PC-9 (cell line): ENCODE measurements at regions of chr11 and their contacts with region 1.

Region 1: DNA sequence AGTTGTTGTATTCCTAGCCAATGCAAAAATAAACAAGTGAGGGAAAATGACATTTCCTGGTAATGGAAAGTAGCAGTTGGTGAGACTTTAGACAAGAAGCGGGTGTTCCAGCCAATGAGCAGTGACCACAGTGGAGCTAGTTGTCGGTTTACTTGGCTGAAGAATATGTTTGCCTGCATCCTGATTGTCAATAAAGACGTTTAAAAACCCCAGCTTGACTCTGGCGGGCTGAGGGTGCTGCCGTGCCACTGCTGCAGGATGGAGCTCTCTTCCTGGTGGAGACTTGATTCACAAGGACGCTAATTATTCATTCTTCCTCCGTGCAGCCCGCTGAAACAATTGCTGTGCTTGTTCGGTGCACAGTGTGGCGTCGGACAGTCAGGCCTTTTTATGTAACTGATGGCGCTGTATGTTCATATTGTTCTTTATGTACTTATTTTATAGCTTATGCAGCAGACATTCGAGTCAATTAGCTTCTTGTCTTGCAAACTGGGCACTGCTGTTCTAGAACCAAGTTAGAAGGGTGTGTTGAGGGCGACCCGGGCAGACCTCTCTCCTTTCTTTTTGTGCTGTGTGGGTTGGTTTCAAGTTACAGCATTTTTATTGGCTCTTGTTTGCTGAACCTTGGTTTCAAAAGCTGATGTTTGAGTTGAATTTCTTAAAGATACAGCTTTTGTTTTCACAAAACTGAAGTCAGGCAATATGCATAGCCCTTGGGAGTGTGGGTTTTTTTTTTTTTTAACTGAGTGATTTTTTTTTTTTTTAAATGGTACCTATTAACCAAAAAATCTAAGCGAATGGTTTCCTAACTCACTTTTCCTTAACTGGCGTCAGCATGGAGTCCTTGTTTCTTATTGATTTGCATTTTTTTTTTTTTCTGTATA is 153.9 kb downstream of the TEAD1 start:
- DNase-seq: peak; percentile 36 to 74
- H3K4me3 ChIP-seq: peak overlapping the region; percentile 52
- H3K27ac ChIP-seq: peak overlapping the region; percentile 52
- H3K4me1 ChIP-seq: peaks cover 32% of the 10 kb centered on the region
- H3K27me3 ChIP-seq: no peaks in the 10 kb centered on the region
- CTCF ChIP-seq: no peak

Region 2: GRCh38 chr11:12600829-12601228 is 227.3 kb before region 1 on chr11:
- CTCF ChIA-PET with region 1: no interaction called
- POLR2A ChIA-PET with region 1: no interaction called
- intact Hi-C with region 1: no loop called
- DNase-seq: no peak
- H3K4me3 ChIP-seq: no peak overlapping the region
- H3K27ac ChIP-seq: no peak overlapping the region
- H3K4me1 ChIP-seq: no peaks in the 10 kb centered on the region
- H3K27me3 ChIP-seq: no peaks in the 10 kb centered on the region
- CTCF ChIP-seq: no peak

Region 3: GRCh38 chr11:12611352-12611751 is 216.8 kb before region 1 on chr11:
- CTCF ChIA-PET with region 1: no interaction called
- POLR2A ChIA-PET with region 1: interaction called, 14 read pairs
- intact Hi-C with region 1: no loop called
- DNase-seq: no peak
- H3K4me3 ChIP-seq: no peak overlapping the region
- H3K27ac ChIP-seq: no peak overlapping the region
- H3K4me1 ChIP-seq: no peaks in the 10 kb centered on the region
- H3K27me3 ChIP-seq: no peaks in the 10 kb centered on the region
- CTCF ChIP-seq: no peak

Region 4: DNA sequence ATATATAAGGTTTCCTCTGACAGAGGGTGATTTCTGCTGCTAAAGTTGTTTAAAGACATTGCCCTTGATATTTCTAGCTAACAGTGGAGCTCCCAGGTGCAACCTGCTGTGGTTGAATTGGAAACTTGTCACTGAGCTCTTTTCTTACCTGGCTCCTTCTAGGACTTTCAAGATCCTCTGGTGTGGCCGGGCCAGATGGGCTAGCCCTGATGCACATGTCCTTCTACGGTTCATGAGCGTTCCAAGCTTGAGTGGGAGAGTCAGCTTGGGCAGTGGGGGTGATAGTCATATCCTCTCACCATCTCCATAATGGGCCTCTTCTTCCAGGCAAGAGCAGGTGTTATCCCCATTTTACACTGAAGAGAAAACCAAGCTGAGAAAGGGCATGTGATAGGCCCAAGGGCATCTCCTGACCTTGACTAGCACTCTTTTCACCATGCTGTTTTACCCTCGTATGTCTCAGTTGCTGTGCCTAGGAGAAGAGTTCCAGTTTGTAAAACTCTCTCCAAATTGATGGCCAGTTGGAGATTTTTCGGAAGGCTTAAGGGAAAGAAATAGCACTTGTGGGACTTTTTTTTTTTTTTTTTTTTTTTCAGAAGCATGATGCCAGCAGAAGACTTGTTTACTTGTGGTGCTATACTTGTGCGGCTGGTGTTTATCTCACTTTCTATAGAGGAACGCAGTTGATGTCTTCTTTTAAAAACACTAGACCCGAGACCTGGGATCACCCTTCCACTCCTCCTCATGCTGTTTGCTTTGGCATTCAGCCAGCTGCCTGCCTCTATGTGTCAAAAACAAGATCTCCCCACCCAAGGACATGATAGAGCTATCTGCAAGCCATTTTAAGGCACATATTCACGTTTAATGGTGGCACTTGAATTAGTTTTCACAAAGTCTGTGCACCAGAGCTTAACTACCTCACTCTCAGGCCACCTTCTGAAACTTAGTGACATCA is 121.3 kb before region 1 on chr11:
- CTCF ChIA-PET with region 1: interaction called, 17 read pairs
- POLR2A ChIA-PET with region 1: no interaction called
- intact Hi-C with region 1: no loop called
- DNase-seq: no peak
- H3K4me3 ChIP-seq: no peak overlapping the region
- H3K27ac ChIP-seq: no peak overlapping the region
- H3K4me1 ChIP-seq: peaks cover 11% of the 10 kb centered on the region; the same call in 1 of the 2 replicates
- H3K27me3 ChIP-seq: no peaks in the 10 kb centered on the region
- CTCF ChIP-seq: no peak

Region 5: DNA sequence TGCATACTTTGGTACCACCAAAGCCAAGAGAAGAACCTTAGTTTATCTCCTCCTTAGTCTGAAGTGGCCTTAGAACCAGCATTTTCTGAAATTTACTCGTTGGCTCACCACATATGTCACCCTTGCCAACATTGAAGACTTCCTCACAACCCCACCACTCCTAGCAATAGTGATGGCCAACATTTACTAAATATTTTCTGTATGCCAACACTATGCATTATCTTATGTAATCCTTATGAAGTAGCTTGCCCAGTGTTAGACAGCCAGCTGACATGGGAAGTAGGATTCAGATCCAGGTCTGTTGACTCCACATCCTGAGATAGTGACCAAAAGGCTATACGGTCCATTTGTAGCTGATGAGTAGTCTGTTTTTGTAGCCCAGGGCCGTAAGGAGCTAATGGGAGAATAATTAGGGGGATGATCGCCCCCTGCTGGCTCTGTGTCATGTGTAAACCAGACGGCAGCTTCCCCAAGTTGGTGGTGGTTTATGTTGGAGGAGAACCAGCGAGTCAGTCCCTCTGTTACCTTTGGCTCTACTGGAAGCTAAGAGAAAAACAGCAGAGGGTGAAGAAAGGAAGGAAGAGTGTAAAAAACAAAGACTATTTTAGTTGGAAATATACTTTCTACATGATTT is 60.5 kb after region 1 on chr11:
- CTCF ChIA-PET with region 1: interaction called, 10 read pairs
- POLR2A ChIA-PET with region 1: no interaction called
- intact Hi-C with region 1: no loop called
- DNase-seq: peak; percentile 41 to 60
- H3K4me3 ChIP-seq: no peak overlapping the region
- H3K27ac ChIP-seq: no peak overlapping the region
- H3K4me1 ChIP-seq: no peaks in the 10 kb centered on the region; the same call in 1 of the 2 replicates
- H3K27me3 ChIP-seq: no peaks in the 10 kb centered on the region
- CTCF ChIP-seq: peak; percentile 76